ENCODE measurements at regions of chr18 and their contacts with region 1.

Region 1: GRCh38 chr18:21191596-21192307 is 50.3 kb upstream of the GREB1L start:
- DNase-seq: no peak
- ATAC-seq: peak in 3 of 4 donors; percentile 63 to 71 (median 67)
- H3K4me3 ChIP-seq: no peak overlapping the region
- H3K27ac ChIP-seq: no peak overlapping the region
- H3K4me1 ChIP-seq: no peaks in the 10 kb centered on the region
- H3K27me3 ChIP-seq: no peaks in the 10 kb centered on the region
- CTCF ChIP-seq: no peak

Region 2: DNA sequence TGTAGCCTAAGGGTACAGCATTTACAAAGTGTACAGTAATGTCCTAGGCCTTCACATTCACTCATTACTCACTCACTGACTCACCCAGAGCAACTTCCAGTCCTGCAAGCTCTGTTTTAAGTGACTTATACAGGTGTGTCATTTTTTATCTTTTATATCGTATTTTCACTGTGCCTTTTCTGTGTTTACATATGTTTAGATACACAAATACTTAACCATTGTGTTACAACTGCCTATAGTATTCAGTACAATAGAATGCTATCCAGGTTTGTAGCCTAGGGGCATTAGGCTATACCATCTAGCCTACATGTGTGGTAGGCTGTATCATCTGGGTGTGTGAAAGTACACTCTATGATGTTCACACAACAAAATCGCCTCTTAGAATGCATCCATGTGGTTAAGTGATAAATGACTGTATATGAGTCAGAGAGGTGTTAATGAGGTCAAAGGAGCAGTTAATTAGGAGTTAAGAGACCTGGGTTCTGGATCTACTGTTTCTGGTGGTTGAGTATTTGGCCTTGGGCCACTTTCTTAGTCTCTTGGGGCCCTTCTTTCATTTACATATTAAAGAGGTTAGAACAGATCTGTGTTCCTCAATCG is 199.4 kb after region 1 on chr18:
- intact Hi-C with region 1: no loop called
- DNase-seq: no peak
- ATAC-seq: peak in 1 of 4 donors; percentile 29
- H3K4me3 ChIP-seq: no peak overlapping the region
- H3K27ac ChIP-seq: no peak overlapping the region
- H3K4me1 ChIP-seq: no peaks in the 10 kb centered on the region
- H3K27me3 ChIP-seq: no peaks in the 10 kb centered on the region
- CTCF ChIP-seq: no peak

Region 3: GRCh38 chr18:21444465-21445023 is 252.8 kb after region 1 on chr18:
- intact Hi-C with region 1: loop called in 2 of 3 experiments (anchors 5 kb)
- DNase-seq: peak in 2 of 6 donors; percentile 3 to 31
- ATAC-seq: peak in 3 of 4 donors; percentile 73 to 78 (median 76)
- H3K4me3 ChIP-seq: no peak overlapping the region
- H3K27ac ChIP-seq: no peak overlapping the region
- H3K4me1 ChIP-seq: no peaks in the 10 kb centered on the region
- H3K27me3 ChIP-seq: peaks cover 0 to 8% (median 0%) of the 10 kb centered on the region in 4 donors
- CTCF ChIP-seq: peak in 3 of 4 donors; percentile 54 to 65 (median 58)

Measured in pancreas (tissue), 10 donors.